ENCODE measurements at regions of chr9 and their contacts with region 1.

Region 1: GRCh38 chr9:13524245-13524644 is 244.8 kb upstream of the MPDZ start:
- DNase-seq: no peak
- H3K4me3 ChIP-seq: no peak overlapping the region
- H3K27ac ChIP-seq: no peak overlapping the region
- H3K4me1 ChIP-seq: peaks cover 18% of the 10 kb centered on the region
- H3K27me3 ChIP-seq: no peaks in the 10 kb centered on the region
- CTCF ChIP-seq: no peak
- POLR2A ChIP-seq: no peak

Region 2: DNA sequence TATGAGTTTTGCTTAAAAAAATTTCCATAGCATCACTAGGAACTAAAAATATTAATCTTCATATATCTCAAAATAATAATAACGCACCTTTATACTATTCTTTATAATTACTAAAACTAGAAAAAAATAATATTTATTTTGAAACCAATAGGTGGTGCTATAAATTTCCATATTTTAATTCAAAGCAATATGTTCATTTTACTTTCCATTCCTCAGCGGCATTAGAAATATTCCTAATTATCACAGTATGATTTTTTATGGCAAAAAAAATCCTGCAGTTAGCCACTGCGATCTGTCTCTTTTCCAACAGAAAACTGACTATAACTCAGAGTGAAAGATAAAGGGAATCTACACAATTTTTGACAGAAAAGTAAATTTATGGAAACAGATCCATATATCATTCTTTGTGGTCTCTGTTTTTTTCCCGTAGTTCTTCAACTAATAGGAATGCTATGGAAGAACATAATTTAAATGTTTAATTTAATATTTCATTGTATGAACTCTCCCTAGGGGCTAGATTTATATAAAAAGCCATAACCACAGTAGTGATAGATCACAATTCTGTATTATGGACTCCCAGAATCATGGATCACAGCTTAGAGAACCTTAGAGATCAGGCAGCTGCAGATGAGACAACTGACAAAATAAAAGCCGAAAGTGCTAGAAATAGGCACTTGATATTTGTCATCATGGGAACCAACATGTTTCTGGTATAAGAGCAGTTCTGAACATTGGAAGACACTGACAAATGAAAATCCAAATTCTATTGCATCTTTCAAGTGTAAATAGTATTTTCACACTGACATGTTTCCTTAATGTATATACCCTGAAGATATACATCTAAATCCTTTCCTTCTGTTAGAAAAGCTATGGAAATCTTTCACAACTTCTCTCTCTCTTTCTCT is 77.1 kb before region 1 on chr9:
- CTCF ChIA-PET with region 1: no interaction called
- POLR2A ChIA-PET with region 1: no interaction called
- dilution Hi-C with region 1: no loop called
- intact Hi-C with region 1: loop called (anchors 5 kb)
- DNase-seq: peak; percentile 63
- H3K4me3 ChIP-seq: peak overlapping the region in 1 of 3 experiments; percentile 18
- H3K27ac ChIP-seq: no peak overlapping the region
- H3K4me1 ChIP-seq: peaks cover 14% of the 10 kb centered on the region
- H3K27me3 ChIP-seq: no peaks in the 10 kb centered on the region
- CTCF ChIP-seq: no peak
- POLR2A ChIP-seq: no peak